CD8-positive, alpha-beta T cell (primary cell): ENCODE measurements at regions of chr13 and their contacts with region 1.

Region 1: DNA sequence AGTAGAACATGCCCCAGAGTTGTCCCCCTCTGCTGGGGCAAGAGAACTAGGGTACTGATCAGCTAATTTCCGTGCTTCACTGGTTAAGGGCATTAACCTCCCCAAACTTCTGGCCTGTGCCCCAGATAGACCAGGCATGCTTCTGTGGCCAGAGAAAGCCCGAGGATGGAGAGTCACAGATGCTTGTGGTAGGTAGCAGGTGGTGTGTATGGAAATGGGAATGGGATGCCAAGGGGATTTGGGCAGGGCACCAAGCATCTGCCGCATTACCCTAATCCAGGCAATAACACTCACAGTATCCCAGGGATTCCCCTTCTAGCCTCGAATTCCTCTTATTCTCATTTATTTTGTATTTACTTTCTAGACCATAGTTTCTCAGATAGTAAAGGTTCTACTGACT is 124.8 kb upstream of the KLF12 start:
- DNase-seq: no peak
- ATAC-seq: no peak
- H3K4me3 ChIP-seq: no peak overlapping the region
- H3K4me3 Mint-ChIP-seq: no peak overlapping the region
- H3K27ac ChIP-seq: no peak overlapping the region
- H3K27ac Mint-ChIP-seq: no peak overlapping the region
- H3K4me1 ChIP-seq: peaks cover 43% of the 10 kb centered on the region
- H3K4me1 Mint-ChIP-seq: peaks cover 59% of the 10 kb centered on the region
- H3K27me3 ChIP-seq: no peaks in the 10 kb centered on the region
- H3K27me3 Mint-ChIP-seq: no peaks in the 10 kb centered on the region
- CTCF ChIP-seq: no peak

Region 2: GRCh38 chr13:73967397-73968165 is 291.4 kb before region 1 on chr13:
- CTCF ChIA-PET with region 1: no interaction called
- POLR2A ChIA-PET with region 1: no interaction called
- intact Hi-C with region 1: no loop called
- DNase-seq: no peak
- ATAC-seq: no peak
- H3K4me3 ChIP-seq: no peak overlapping the region
- H3K4me3 Mint-ChIP-seq: no peak overlapping the region
- H3K27ac ChIP-seq: no peak overlapping the region
- H3K27ac Mint-ChIP-seq: peak overlapping the region; percentile 8
- H3K4me1 ChIP-seq: peaks cover 12% of the 10 kb centered on the region
- H3K4me1 Mint-ChIP-seq: peaks cover 78% of the 10 kb centered on the region
- H3K27me3 ChIP-seq: no peaks in the 10 kb centered on the region
- H3K27me3 Mint-ChIP-seq: no peaks in the 10 kb centered on the region
- CTCF ChIP-seq: no peak

Region 3: GRCh38 chr13:74246487-74246886 is 12.5 kb before region 1 on chr13:
- CTCF ChIA-PET with region 1: interaction called, 5 read pairs
- POLR2A ChIA-PET with region 1: interaction called, 3 read pairs
- intact Hi-C with region 1: loop called (anchors 1 to 2 kb)
- DNase-seq: peak in 6 of 9 experiments; percentile 14 to 51 (median 32)
- ATAC-seq: no peak
- H3K4me3 ChIP-seq: peak overlapping the region; percentile 6 to 12
- H3K4me3 Mint-ChIP-seq: peak overlapping the region; percentile 67
- H3K27ac ChIP-seq: peak overlapping the region; percentile 37 to 82
- H3K27ac Mint-ChIP-seq: peak overlapping the region; percentile 98
- H3K4me1 ChIP-seq: peaks cover 85% of the 10 kb centered on the region
- H3K4me1 Mint-ChIP-seq: peaks cover 94% of the 10 kb centered on the region
- H3K27me3 ChIP-seq: no peaks in the 10 kb centered on the region
- H3K27me3 Mint-ChIP-seq: no peaks in the 10 kb centered on the region
- CTCF ChIP-seq: no peak